Common myeloid progenitor, CD34-positive (primary cell): ENCODE measurements at regions of chr1 and their contacts with region 1.

Region 1: GRCh38 chr1:203117611-203118575 is 9.6 kb upstream of the ADORA1 start:
- DNase-seq: peak; percentile 59 to 72 (median 72)
- H3K4me3 ChIP-seq: no peak overlapping the region
- H3K27ac ChIP-seq: no peak overlapping the region
- H3K4me1 ChIP-seq: peaks cover 0 to 13% (median 9%) of the 10 kb centered on the region in 4 experiments
- H3K27me3 ChIP-seq: peaks cover 0 to 67% (median 28%) of the 10 kb centered on the region in 5 experiments

Region 2: DNA sequence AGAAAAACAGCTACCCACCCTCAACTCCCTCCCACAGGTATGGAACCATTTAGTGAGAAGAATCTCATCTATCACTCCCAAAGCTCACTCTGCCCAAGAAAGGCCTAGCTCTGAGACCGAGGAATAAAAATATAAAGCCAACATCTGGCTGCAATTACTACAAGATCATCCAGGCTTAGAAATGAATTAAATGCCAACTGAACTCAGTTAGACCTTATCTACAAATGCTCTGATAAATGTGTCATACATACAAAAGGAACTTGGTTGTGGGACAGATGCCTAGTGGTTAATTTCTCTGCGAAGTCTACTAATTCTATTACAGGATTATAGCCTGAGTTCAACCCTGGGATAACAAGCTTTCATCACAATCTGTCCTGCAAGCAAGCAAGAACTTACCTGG is 166.5 kb before region 1 on chr1:
- CTCF ChIA-PET with region 1: no interaction called
- POLR2A ChIA-PET with region 1: no interaction called
- DNase-seq: no peak
- H3K4me3 ChIP-seq: no peak overlapping the region
- H3K27ac ChIP-seq: peak overlapping the region in 1 of 2 experiments; percentile 19
- H3K4me1 ChIP-seq: peaks cover 17 to 30% (median 25%) of the 10 kb centered on the region in 4 experiments
- H3K27me3 ChIP-seq: no peaks in the 10 kb centered on the region

Region 3: DNA sequence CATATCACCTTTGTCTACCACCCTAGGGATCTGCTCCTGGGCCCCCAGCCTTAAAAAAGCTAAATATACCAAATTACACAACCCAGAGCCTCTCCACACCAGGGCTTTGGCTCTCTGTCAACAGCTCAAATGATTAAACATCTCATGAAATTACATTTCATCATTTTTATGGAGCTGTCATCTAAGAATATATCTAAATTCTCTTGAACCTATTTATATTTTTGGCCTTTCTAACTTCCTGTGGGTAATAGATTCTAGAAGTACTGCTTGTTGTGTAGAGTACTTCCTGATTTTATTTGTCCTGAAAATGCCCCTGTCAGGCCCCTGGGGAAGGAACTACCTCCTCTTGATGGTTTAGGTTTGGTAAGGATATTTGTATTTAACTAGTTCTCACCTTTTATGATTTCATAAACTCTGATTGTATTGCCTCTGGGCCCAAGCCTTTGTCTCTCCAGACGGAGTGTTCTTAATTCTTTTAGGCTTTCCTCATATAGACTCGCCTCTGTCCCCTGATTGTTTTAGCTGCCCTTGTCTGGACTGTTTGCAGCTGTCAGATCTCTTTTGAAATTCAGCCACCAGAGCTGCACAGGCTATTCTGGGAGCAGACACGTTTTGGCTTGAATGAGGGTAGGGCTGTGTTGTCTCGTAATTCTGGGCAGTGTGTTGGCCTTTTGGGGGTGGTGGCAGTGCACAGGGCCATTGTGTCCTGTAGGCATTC is 48.7 kb before region 1 on chr1:
- CTCF ChIA-PET with region 1: interaction called, 11 read pairs
- POLR2A ChIA-PET with region 1: no interaction called
- DNase-seq: peak in 2 of 3 donors; percentile 54 to 55
- H3K4me3 ChIP-seq: no peak overlapping the region
- H3K27ac ChIP-seq: no peak overlapping the region
- H3K4me1 ChIP-seq: peaks cover 1 to 19% (median 15%) of the 10 kb centered on the region in 4 experiments
- H3K27me3 ChIP-seq: peaks cover 0 to 16% (median 0%) of the 10 kb centered on the region in 5 experiments

Region 4: DNA sequence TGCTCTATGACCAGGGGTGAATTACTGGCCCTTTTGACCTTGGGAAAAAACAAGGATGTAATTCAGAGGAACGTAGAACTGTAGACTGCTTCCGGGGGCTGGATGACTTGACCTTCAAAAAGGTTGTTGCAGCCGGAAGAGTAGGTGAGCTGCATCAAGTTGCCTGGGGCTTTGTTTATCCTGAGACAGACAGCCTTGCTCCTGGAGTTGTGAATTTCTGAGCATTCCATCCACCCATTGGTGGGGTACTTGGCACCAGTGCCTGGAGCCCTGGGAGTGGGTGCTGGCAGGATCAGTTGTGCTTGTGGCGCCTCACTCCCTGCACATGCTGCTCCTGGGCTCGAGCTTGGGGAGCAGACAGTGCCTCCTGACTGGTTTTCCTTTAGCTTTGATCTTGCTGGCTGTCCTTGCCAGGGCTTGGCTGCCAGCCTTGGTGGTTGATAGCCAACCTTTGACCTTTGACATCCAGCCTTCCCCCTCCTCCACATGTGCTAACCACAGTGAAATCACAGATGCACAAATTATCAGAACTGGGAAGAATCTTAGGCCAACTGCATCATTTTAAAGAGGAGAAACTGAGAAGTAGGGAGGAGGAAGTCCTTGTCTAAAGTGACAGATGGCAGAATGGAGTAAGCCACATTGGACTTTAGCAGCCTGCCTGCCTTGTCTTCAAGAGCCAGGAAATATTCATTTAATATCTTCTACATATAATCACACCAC is 15.8 kb before region 1 on chr1:
- CTCF ChIA-PET with region 1: interaction called, 13 read pairs
- POLR2A ChIA-PET with region 1: no interaction called
- DNase-seq: peak in 1 of 3 donors; percentile 9
- H3K4me3 ChIP-seq: no peak overlapping the region
- H3K27ac ChIP-seq: no peak overlapping the region
- H3K4me1 ChIP-seq: peaks cover 0 to 2% (median 0%) of the 10 kb centered on the region in 4 experiments
- H3K27me3 ChIP-seq: peaks cover 0 to 4% (median 0%) of the 10 kb centered on the region in 5 experiments

Region 5: DNA sequence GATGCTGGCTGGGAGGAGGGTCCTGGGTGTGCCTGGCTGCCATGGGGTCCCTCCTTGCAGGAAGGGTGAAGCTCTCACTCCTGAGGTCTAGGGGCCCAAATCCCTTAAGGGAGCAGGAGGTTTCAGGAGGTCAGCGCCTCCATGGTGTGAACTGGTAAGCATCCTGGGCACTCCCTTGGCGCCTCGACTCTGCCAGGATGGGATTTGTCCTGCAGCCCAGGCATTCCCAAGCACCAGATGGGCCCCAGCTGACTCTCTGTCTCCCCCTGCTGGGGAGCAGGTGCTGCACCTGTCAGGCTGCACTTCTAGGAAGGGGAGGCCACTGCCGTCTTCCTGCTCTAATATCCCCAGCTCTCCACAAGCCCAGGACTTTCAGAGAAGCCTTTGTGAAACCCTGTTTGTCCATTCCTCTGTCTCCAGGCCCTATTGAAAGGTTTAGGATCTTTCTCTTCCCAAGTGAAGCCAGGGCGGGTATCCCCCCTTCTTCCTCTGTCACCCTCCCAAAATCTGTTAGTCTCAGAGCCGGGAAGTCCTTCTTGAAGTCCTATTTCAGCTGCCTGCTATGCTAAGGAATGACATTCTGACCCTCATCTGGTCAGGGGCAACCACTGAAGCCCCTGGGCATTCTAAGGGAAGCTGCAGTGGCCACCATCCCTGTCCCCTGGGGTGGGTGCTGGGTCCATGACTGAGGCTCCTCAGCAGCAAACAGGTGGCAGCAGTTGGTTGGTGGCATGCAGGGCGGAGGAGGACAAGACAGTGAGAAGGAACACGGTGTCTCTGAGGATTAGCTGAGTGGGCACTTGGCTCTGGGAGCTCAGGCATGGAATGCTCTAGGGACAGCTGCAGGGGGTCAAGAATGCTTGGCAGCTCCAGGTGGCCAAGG is 54.5 kb after region 1 on chr1:
- CTCF ChIA-PET with region 1: interaction called, 313 read pairs
- POLR2A ChIA-PET with region 1: no interaction called
- DNase-seq: peak; percentile 42 to 61 (median 43)
- H3K4me3 ChIP-seq: no peak overlapping the region
- H3K27ac ChIP-seq: no peak overlapping the region
- H3K4me1 ChIP-seq: peaks cover 0 to 13% (median 2%) of the 10 kb centered on the region in 4 experiments
- H3K27me3 ChIP-seq: peaks cover 0 to 5% (median 0%) of the 10 kb centered on the region in 5 experiments

Region 6: GRCh38 chr1:203267347-203267846 is 149.5 kb after region 1 on chr1:
- CTCF ChIA-PET with region 1: interaction called, 10 read pairs
- POLR2A ChIA-PET with region 1: no interaction called
- DNase-seq: peak; percentile 85 to 92 (median 89)
- H3K4me3 ChIP-seq: peak overlapping the region; percentile 41 to 82 (median 72)
- H3K27ac ChIP-seq: peak overlapping the region in 1 of 2 experiments; percentile 43
- H3K4me1 ChIP-seq: peaks cover 0 to 28% (median 20%) of the 10 kb centered on the region in 4 experiments
- H3K27me3 ChIP-seq: no peaks in the 10 kb centered on the region